HCT116 (cell line): ENCODE measurements at regions of chr1 and their contacts with region 1.

Region 1: DNA sequence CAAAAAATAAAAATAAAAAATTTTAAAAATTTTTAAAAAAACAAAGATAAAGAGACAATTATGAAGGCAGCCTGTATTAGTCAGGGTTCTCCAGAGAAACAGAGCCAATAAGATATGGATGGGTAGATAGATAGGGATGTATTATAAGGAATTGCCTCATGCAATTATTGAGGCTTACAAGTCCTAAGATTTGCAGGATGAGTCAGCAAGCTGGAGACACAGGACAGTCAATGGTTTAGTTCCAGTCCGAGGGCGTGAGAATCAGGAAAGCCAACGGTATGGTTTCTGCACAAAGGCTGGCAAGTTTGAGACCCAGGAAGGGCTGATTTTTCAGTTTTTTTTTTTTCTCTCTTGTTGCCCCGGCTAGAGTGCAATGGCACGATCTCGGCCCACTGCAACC is 24.1 kb upstream of the EIF4G3 start:
- DNase-seq: no peak
- ATAC-seq: no peak
- H3K4me3 ChIP-seq: no peak overlapping the region
- H3K27ac ChIP-seq: no peak overlapping the region
- H3K4me1 ChIP-seq: no peaks in the 10 kb centered on the region
- H3K27me3 ChIP-seq: no peaks in the 10 kb centered on the region
- CTCF ChIP-seq: no peak
- POLR2A ChIP-seq: no peak
- RAD21 ChIP-seq: no peak

Region 2: GRCh38 chr1:20521960-20522861 is 678.6 kb before region 1 on chr1:
- CTCF ChIA-PET with region 1: no interaction called
- POLR2A ChIA-PET with region 1: no interaction called
- RAD21 ChIA-PET with region 1: no interaction called
- intact Hi-C with region 1: loop called (anchors 1 kb)
- DNase-seq: peak; percentile 81
- ATAC-seq: peak; percentile 94
- H3K4me3 ChIP-seq: peak overlapping the region in 1 of 2 experiments; percentile 18; a peak in 2 of 4 replicates
- H3K27ac ChIP-seq: no peak overlapping the region
- H3K4me1 ChIP-seq: peaks cover 0 to 8% of the 10 kb centered on the region in 2 experiments; a peak in 2 of 4 replicates
- H3K27me3 ChIP-seq: no peaks in the 10 kb centered on the region
- CTCF ChIP-seq: peak; percentile 83 to 96 (median 91)
- POLR2A ChIP-seq: no peak
- RAD21 ChIP-seq: peak; percentile 99

Region 3: GRCh38 chr1:20786253-20787028 is 414.3 kb before region 1 on chr1:
- CTCF ChIA-PET with region 1: interaction called, 10 read pairs
- POLR2A ChIA-PET with region 1: no interaction called
- RAD21 ChIA-PET with region 1: no interaction called
- intact Hi-C with region 1: loop called (anchors 10 kb)
- DNase-seq: peak; percentile 85
- ATAC-seq: peak; percentile 87
- H3K4me3 ChIP-seq: peak overlapping the region; percentile 88 to 91
- H3K27ac ChIP-seq: peak overlapping the region; percentile 93
- H3K4me1 ChIP-seq: peaks cover 14 to 21% of the 10 kb centered on the region in 2 experiments
- H3K27me3 ChIP-seq: no peaks in the 10 kb centered on the region
- CTCF ChIP-seq: no peak
- POLR2A ChIP-seq: peak; percentile 42
- RAD21 ChIP-seq: no peak

Region 4: GRCh38 chr1:20981915-20982314 is 218.9 kb before region 1 on chr1:
- CTCF ChIA-PET with region 1: interaction called, 23 read pairs
- POLR2A ChIA-PET with region 1: interaction called, 4 read pairs
- RAD21 ChIA-PET with region 1: interaction called in 1 of 2 experiments, 6 read pairs
- intact Hi-C with region 1: loop called (anchors 1 kb)
- DNase-seq: no peak
- ATAC-seq: peak; percentile 67; the same call in 1 of the 2 replicates
- H3K4me3 ChIP-seq: no peak overlapping the region
- H3K27ac ChIP-seq: no peak overlapping the region
- H3K4me1 ChIP-seq: no peaks in the 10 kb centered on the region
- H3K27me3 ChIP-seq: no peaks in the 10 kb centered on the region
- CTCF ChIP-seq: peak; percentile 15 to 48 (median 29); a peak in 2 of 6 replicates
- POLR2A ChIP-seq: no peak
- RAD21 ChIP-seq: peak; percentile 65

Region 5: DNA sequence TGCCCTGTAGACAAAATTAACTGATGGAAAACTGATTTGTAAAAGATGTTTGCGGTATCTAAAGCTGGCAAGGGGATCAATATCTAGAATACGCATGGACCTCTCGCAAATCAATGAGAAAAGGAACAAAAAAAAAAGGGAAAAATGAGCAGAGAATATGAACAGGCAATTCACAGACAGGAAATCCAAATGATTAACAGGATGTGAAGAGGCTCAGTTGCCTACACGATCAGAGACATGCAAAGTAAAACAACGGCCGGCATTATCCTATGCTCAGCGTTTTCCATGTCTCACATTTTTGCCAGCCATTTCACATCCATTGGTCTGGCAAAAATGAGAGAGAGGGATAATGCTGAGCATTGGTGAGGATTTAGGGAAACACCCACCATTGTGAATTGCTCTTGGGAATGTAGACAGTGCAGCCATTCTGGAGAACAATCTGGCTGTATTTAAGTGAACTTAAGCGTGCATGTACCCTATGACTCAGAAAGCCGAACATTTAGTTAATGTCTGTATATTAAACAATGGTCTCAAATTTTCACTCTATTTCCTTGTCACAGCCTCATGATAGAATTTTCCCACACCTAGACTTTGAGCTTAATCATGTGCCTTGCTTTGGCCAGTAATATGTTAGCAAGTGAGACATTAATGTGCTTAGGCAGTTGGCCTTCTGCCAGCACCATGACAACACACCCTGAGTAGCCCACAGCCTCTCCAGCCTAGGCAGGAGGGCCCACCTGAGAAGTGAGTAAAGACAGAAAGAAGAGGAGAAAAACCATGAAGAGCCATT is 178.1 kb after region 1 on chr1:
- CTCF ChIA-PET with region 1: no interaction called
- POLR2A ChIA-PET with region 1: no interaction called
- RAD21 ChIA-PET with region 1: no interaction called
- intact Hi-C with region 1: no loop called
- DNase-seq: no peak
- ATAC-seq: no peak
- H3K4me3 ChIP-seq: no peak overlapping the region
- H3K27ac ChIP-seq: no peak overlapping the region
- H3K4me1 ChIP-seq: no peaks in the 10 kb centered on the region
- H3K27me3 ChIP-seq: no peaks in the 10 kb centered on the region
- CTCF ChIP-seq: no peak
- POLR2A ChIP-seq: no peak
- RAD21 ChIP-seq: no peak